Activated B cell treated with CpG ODN at 0.5 μM for 24 hours (primary cell): ENCODE measurements at regions of chr1 and their contacts with region 1.

Region 1: GRCh38 chr1:178898401-178898800 is 27.5 kb upstream of the ANGPTL1 start:
- DNase-seq: no peak
- ATAC-seq: no peak
- H3K4me3 Mint-ChIP-seq: no peak overlapping the region
- H3K27ac Mint-ChIP-seq: peak overlapping the region; percentile 72
- H3K4me1 Mint-ChIP-seq: peaks cover 19% of the 10 kb centered on the region
- H3K27me3 Mint-ChIP-seq: no peaks in the 10 kb centered on the region
- CTCF ChIP-seq: no peak

Region 2: GRCh38 chr1:178857126-178857525 is 41.3 kb before region 1 on chr1:
- CTCF ChIA-PET with region 1: no interaction called
- POLR2A ChIA-PET with region 1: no interaction called
- intact Hi-C with region 1: loop called (anchors 5 kb)
- DNase-seq: no peak
- ATAC-seq: no peak
- H3K4me3 Mint-ChIP-seq: no peak overlapping the region
- H3K27ac Mint-ChIP-seq: peak overlapping the region; percentile 12
- H3K4me1 Mint-ChIP-seq: no peaks in the 10 kb centered on the region
- H3K27me3 Mint-ChIP-seq: no peaks in the 10 kb centered on the region
- CTCF ChIP-seq: no peak

Region 3: GRCh38 chr1:178877896-178878295 is 20.5 kb before region 1 on chr1:
- CTCF ChIA-PET with region 1: interaction called, 3 read pairs
- POLR2A ChIA-PET with region 1: no interaction called
- intact Hi-C with region 1: loop called (anchors 2 kb)
- DNase-seq: no peak
- ATAC-seq: no peak
- H3K4me3 Mint-ChIP-seq: no peak overlapping the region
- H3K27ac Mint-ChIP-seq: peak overlapping the region; percentile 53
- H3K4me1 Mint-ChIP-seq: peaks cover under 1% of the 10 kb centered on the region
- H3K27me3 Mint-ChIP-seq: no peaks in the 10 kb centered on the region
- CTCF ChIP-seq: no peak

Region 4: DNA sequence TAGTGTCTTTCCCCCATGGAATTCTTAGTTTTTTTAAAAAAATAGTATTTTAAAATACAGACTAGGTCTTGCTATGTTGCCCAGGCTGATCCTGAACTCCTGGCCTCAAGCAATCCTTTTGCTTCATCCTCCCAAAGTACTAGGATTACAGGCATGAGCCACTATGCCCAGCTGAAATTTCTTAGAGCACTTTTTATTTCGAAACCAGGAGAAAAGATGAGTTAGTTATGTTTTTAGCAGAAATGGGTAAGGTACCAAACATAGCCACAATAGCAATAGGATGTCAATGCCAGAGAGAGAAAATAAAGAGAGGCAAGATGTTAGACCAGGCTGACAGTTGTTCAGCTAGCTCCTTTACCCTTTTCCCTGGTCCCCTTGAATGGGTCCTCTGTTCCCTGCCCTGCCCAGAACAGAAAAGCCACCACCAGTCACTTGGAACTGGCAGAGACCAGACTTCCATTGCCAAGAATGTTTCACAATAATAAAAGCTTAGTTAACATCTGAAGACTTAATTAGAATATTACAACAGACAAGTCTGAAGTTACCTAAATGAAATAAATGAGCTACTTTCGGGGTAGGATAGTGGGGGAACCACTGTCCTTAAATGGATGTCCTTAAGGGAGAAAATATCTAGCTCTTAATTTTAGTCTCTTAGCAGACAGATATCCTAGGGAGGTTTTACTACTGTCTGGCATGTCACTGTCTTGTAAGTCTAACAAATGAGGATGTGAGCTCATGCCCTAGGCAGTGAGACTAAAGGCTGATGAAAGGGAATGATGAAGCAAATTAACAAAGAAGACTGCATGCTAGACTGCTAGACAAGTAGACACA is 276.8 kb after region 1 on chr1:
- CTCF ChIA-PET with region 1: no interaction called
- POLR2A ChIA-PET with region 1: no interaction called
- intact Hi-C with region 1: no loop called
- DNase-seq: no peak
- ATAC-seq: no peak
- H3K4me3 Mint-ChIP-seq: no peak overlapping the region
- H3K27ac Mint-ChIP-seq: no peak overlapping the region
- H3K4me1 Mint-ChIP-seq: no peaks in the 10 kb centered on the region
- H3K27me3 Mint-ChIP-seq: no peaks in the 10 kb centered on the region
- CTCF ChIP-seq: no peak

Region 5: GRCh38 chr1:179706339-179706941 is 808.0 kb after region 1 on chr1:
- CTCF ChIA-PET with region 1: no interaction called
- POLR2A ChIA-PET with region 1: no interaction called
- intact Hi-C with region 1: no loop called
- DNase-seq: no peak
- ATAC-seq: no peak
- H3K4me3 Mint-ChIP-seq: no peak overlapping the region
- H3K27ac Mint-ChIP-seq: no peak overlapping the region
- H3K4me1 Mint-ChIP-seq: peaks cover 4% of the 10 kb centered on the region
- H3K27me3 Mint-ChIP-seq: peaks cover 7% of the 10 kb centered on the region
- CTCF ChIP-seq: no peak